ENCODE measurements at regions of chr1 and their contacts with region 1.

Region 1: DNA sequence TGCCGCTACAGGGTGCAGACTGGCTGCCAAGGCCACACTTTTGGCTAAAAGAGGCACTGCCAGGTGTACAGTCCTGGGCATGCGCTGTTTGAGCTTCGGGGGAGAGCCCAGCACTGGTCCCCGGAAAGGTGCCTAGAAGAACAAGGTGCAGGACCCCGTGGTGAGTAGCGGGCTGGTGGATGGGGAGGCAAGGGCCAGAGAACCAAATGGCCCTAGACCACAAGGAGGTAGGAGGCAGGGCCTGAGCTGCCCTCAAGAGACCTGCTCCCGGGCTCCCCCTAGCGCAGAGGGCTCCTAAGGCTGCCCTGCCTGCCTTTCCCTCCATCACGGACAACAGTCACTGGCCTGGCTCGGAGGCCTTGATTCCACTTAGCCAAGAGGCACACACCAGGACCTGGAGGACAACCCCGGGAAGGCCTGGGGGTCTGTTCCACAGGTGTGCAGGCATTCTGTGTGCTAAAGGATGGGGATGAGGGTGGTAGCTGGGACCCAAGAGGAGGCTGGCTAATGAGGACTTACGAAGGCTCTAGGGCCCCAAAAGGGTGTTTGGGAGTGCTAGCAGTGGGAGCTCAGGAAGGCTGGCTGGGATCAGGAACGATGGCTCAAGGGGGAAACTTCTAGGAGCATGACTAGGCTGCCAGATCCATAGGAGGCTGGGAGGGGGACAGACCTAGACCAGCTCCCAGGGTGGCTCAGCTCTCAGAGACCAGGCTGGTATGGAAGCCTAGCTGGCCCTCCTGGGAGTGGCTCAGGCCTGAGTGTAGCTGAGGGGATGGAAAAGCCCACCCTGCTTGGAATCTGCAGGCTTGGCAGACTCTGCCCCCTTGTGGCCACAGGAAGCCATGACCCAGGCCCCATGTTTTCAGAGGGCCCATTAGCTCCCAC is 742 bp downstream of the ARTN start:
- DNase-seq: peak; percentile 42 to 68 (median 63)
- H3K4me3 ChIP-seq: peak overlapping the region in 3 of 7 experiments; percentile 62 to 69 (median 63)
- H3K27ac ChIP-seq: no peak overlapping the region
- H3K4me1 ChIP-seq: peaks cover 0 to 37% (median 25%) of the 10 kb centered on the region in 4 experiments
- H3K27me3 ChIP-seq: peaks cover 0 to 26% (median 3%) of the 10 kb centered on the region in 5 experiments

Region 2: GRCh38 chr1:43763497-43763973 is 170.8 kb before region 1 on chr1:
- CTCF ChIA-PET with region 1: interaction called, 247 read pairs
- POLR2A ChIA-PET with region 1: interaction called, 5 read pairs
- DNase-seq: peak; percentile 74 to 85 (median 80)
- H3K4me3 ChIP-seq: no peak overlapping the region
- H3K27ac ChIP-seq: no peak overlapping the region
- H3K4me1 ChIP-seq: peaks cover 0 to 9% (median 6%) of the 10 kb centered on the region in 4 experiments
- H3K27me3 ChIP-seq: no peaks in the 10 kb centered on the region

Region 3: DNA sequence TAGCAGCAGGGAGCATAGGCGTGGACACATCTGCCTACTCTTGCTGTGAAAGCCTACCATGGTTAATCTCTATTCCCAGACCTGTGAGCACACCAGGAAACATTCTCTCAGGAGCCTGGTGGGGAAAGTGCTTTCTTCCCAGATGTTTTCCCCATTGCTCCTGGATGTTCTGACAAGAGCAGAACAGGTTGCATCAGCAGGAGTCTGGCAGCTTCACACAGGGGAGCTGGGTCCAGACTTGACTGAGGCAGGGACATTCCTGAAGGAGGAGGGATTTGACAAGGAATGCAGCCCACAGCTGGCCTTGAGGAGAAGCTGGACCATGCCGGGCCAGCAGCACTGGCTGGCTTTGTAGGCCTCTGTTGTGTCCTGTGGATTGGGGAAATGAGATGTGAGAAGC is 21.7 kb before region 1 on chr1:
- CTCF ChIA-PET with region 1: interaction called, 21 read pairs
- POLR2A ChIA-PET with region 1: no interaction called
- DNase-seq: no peak
- H3K4me3 ChIP-seq: no peak overlapping the region
- H3K27ac ChIP-seq: no peak overlapping the region
- H3K4me1 ChIP-seq: peaks cover 0 to 24% (median 8%) of the 10 kb centered on the region in 4 experiments
- H3K27me3 ChIP-seq: no peaks in the 10 kb centered on the region

Region 4: GRCh38 chr1:43946236-43947060 is 12.1 kb after region 1 on chr1 and contains the start of gene IPO13:
- CTCF ChIA-PET with region 1: interaction called, 120 read pairs
- POLR2A ChIA-PET with region 1: interaction called, 5 read pairs
- DNase-seq: peak; percentile 96 to 98 (median 98)
- H3K4me3 ChIP-seq: peak within 1 kb of the TSS; percentile 67 to 92 (median 82)
- H3K27ac ChIP-seq: peak within 1 kb of the TSS; percentile 98 to 99
- H3K4me1 ChIP-seq: peaks cover 6 to 37% (median 23%) of the 10 kb centered on the region in 4 experiments
- H3K27me3 ChIP-seq: no peaks in the 10 kb centered on the region

Region 5: DNA sequence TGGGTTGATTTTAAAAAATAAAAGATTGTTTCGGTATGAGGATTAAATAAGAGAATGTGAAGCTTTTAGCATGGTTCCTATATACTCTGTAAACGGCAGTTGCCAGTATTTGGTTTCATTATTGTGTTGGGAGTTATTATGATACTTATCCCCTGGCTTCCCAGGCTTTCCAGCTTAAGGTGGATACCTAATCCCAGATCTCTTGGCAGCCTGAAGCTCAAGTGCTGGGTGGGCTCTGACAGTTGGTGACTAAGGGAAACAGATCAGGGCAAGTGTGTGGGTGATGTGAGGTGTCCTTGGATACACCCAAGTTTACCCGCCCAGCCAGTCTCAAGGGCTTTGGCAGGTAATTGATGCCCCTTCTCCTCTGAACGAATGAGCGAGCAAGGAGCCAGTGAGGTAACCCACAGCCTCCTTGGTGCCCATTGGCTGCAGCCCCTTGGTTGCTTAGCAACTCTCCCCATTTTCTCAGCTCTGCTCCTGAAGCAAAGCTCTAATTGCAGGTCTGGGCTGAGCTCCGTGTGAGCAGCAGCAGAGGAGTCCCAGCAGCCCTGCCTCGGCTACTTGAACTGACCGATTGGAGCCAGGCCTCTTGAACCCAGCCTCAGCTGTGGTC is 18.5 kb after region 1 on chr1:
- CTCF ChIA-PET with region 1: interaction called, 120 read pairs
- POLR2A ChIA-PET with region 1: no interaction called
- DNase-seq: peak in 1 of 3 donors; percentile 11
- H3K4me3 ChIP-seq: no peak overlapping the region
- H3K27ac ChIP-seq: no peak overlapping the region
- H3K4me1 ChIP-seq: peaks cover 3 to 8% (median 4%) of the 10 kb centered on the region in 4 experiments
- H3K27me3 ChIP-seq: no peaks in the 10 kb centered on the region

Region 6: DNA sequence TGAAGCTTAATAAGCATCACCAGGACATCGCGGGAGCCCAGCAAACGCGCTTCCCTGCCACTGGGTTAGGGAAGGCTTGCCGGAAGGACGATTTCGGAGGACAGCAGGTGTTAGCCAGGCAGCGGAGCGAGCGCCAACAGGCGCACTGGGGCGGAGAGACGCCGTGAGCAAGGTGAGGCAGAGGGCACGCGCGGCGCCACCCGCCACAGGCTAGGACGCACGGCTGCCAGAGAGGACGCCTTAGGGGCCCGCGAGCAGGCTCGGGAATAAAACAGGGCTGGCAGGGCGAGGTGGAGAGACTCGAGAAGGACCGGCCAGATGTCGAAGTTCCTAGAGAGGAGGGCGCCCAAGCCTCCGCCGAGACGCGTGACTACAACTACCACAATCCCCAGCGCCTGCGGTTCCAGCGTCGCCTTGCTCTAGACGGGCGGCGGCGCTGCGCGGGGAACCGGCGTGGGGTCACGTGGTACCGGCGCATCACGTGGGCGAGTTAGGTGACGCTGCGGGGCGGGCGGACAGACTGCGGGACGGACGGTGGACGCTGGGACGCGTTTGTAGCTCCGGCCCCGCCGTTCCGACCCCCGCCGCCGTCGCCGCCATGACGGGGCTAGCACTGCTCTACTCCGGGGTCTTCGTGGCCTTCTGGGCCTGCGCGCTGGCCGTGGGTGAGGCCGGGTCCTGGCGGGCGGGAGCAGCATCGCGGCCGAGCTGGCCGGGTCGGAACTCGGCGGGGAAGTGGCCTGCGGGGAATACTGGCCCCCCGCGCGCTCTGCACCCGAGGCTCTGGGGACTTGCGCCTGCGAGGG is 40.3 kb after region 1 on chr1 and contains the start of gene ATP6V0B:
- CTCF ChIA-PET with region 1: interaction called, 12 read pairs
- POLR2A ChIA-PET with region 1: no interaction called
- DNase-seq: peak; percentile 91 to 95 (median 94)
- H3K4me3 ChIP-seq: peak within 1 kb of the TSS; percentile 57 to 95 (median 88)
- H3K27ac ChIP-seq: peak within 1 kb of the TSS; percentile 64 to 90
- H3K4me1 ChIP-seq: peaks cover 7 to 56% (median 43%) of the 10 kb centered on the region in 4 experiments
- H3K27me3 ChIP-seq: no peaks in the 10 kb centered on the region